Activated CD4-positive, alpha-beta memory T cell treated with anti-CD3 and anti-CD28 coated beads, Interleukin-2, amount 10 ng/mL, durations not matched to agents 7 days and 5 days (primary cell): ENCODE measurements at regions of chr16 and their contacts with region 1.

Region 1: GRCh38 chr16:77190478-77191258 is at the start of gene MON1B:
- DNase-seq: peak; percentile 95
- H3K4me3 Mint-ChIP-seq: peak within 1 kb of the TSS; percentile 93
- H3K27ac Mint-ChIP-seq: peak within 1 kb of the TSS; percentile 100
- H3K4me1 Mint-ChIP-seq: peaks cover 38% of the 10 kb centered on the region
- H3K27me3 Mint-ChIP-seq: peaks cover 4% of the 10 kb centered on the region
- total RNA-seq, gene MON1B: 74.1 to 75.4 TPM

Region 2: GRCh38 chr16:77207030-77207429 is 16.4 kb after region 1 on chr16:
- CTCF ChIA-PET with region 1: no interaction called
- POLR2A ChIA-PET with region 1: interaction called, 38 read pairs
- DNase-seq: no peak
- H3K4me3 Mint-ChIP-seq: no peak overlapping the region
- H3K27ac Mint-ChIP-seq: no peak overlapping the region
- H3K4me1 Mint-ChIP-seq: peaks cover 7% of the 10 kb centered on the region
- H3K27me3 Mint-ChIP-seq: no peaks in the 10 kb centered on the region

Region 3: GRCh38 chr16:77211880-77212740 is 21.4 kb after region 1 on chr16:
- CTCF ChIA-PET with region 1: no interaction called
- POLR2A ChIA-PET with region 1: interaction called, 38 read pairs
- DNase-seq: peak; percentile 76
- H3K4me3 Mint-ChIP-seq: peak overlapping the region; percentile 79
- H3K27ac Mint-ChIP-seq: peak overlapping the region; percentile 27
- H3K4me1 Mint-ChIP-seq: peaks cover 11% of the 10 kb centered on the region
- H3K27me3 Mint-ChIP-seq: no peaks in the 10 kb centered on the region

Region 4: DNA sequence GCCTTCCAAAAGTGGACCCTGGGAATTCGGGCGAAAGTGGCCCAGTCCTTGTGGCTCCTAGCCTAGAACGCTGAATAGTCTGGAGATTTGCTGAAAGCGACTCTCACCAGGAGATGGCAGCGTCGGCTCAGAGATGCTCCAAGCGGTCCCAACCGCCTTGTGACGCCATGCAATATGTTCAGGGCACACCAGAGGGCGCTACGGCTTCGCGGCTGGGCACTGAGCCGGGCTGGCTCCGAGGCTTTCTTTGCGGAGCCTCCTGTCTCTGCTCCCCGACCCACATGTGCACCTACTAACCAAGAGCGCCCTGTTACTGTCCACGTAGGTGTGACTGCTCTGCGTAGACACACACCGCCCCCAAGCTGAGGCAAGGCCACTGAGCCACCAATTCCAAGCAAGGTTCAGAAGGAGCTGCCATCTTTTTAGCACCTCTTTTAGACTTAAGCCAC is 45.4 kb after region 1 on chr16:
- CTCF ChIA-PET with region 1: no interaction called
- POLR2A ChIA-PET with region 1: no interaction called
- DNase-seq: peak; percentile 88
- H3K4me3 Mint-ChIP-seq: no peak overlapping the region
- H3K27ac Mint-ChIP-seq: no peak overlapping the region
- H3K4me1 Mint-ChIP-seq: peaks cover 6% of the 10 kb centered on the region
- H3K27me3 Mint-ChIP-seq: peaks cover 10% of the 10 kb centered on the region

Region 5: GRCh38 chr16:77262971-77263370 is 72.3 kb after region 1 on chr16:
- CTCF ChIA-PET with region 1: no interaction called
- POLR2A ChIA-PET with region 1: no interaction called
- DNase-seq: no peak
- H3K4me3 Mint-ChIP-seq: no peak overlapping the region
- H3K27ac Mint-ChIP-seq: no peak overlapping the region
- H3K4me1 Mint-ChIP-seq: no peaks in the 10 kb centered on the region
- H3K27me3 Mint-ChIP-seq: peaks cover 4% of the 10 kb centered on the region